ENCODE measurements at regions of chr16 and their contacts with region 1.

Region 1: GRCh38 chr16:74034862-74035261 is 261.8 kb upstream of the PSMD7 start:
- ATAC-seq: peak; percentile 35 to 71 (median 56)
- H3K4me3 ChIP-seq: no peak overlapping the region
- H3K27ac ChIP-seq: no peak overlapping the region
- H3K4me1 ChIP-seq: peaks cover 50 to 67% of the 10 kb centered on the region in 2 donors

Region 2: DNA sequence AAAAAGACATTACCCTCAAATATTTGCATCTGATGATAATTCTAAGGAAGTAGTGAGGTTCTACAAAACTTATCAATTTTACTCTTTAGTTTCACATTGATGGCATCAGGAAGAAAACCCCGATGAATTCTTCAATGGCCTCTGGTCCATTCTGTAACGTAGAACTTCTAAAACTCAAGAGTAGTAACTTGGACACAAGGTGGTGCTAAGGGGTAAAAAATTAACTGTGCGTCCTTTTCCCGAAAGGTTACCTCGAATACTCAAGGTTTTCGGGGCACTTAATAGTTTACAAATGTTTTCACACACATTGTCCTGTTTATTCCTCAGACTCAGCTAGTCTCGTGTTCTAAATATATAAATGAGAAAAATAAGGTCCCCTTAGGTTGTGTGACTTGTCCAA is 469.6 kb before region 1 on chr16:
- in situ Hi-C with region 1: loop called in 1 of 9 experiments (anchors 25 kb)
- ATAC-seq: peak in 2 of 8 experiments; percentile 28 to 38
- H3K4me3 ChIP-seq: no peak overlapping the region
- H3K27ac ChIP-seq: no peak overlapping the region
- H3K4me1 ChIP-seq: peaks cover 7 to 12% of the 10 kb centered on the region in 2 donors

Region 3: DNA sequence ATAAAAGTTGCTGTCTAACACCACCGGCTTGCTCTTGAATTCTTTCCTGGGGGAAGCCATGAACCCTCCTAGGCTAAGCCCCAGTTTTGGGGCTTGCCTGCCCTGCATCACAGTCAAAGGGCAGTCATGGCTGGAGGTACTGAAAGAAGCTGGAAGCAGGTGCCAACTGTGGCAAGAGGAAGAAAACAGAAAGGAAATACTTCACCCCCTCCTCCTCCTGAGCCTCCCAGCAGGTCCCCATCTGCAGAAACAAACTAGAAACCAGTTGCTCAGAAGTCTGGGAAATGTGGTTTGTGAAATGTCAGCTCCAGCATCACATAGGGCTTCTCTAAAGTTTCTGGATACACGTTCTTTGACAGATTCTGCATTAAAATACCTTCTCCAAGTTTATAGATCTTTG is 111.8 kb after region 1 on chr16:
- in situ Hi-C with region 1: no loop called
- ATAC-seq: no peak
- H3K4me3 ChIP-seq: no peak overlapping the region
- H3K27ac ChIP-seq: no peak overlapping the region
- H3K4me1 ChIP-seq: no peaks in the 10 kb centered on the region

Region 4: DNA sequence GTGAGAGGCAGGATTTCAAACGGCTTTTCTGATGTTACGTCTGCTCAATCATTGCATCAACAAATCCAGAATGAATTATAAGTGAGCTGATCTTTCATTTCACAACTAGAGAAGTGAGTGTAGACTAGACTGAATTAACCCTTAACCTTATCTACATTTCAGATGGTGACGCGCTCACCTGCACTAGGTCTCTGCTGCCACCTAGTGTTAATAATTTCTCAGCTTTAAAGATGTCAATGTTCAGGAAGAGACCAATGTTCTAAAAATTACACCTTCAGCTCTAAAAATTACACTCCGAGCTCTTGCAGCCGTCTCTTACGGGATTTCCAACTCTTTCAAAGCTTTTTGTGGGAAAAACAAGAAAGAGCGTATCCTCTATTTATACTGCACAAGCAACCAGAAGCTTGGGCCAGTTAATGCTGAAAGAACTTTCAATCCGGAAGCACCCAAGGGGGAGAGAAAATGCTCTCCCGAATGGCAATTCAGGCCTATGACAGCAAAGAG is 827.9 kb after region 1 on chr16:
- in situ Hi-C with region 1: no loop called
- ATAC-seq: peak in 6 of 8 experiments; percentile 44 to 72 (median 55)
- H3K4me3 ChIP-seq: no peak overlapping the region
- H3K27ac ChIP-seq: no peak overlapping the region
- H3K4me1 ChIP-seq: peaks cover 6 to 11% of the 10 kb centered on the region in 2 donors